Mammary epithelial cell (primary cell): ENCODE measurements at regions of chr21 and their contacts with region 1.

Region 1: DNA sequence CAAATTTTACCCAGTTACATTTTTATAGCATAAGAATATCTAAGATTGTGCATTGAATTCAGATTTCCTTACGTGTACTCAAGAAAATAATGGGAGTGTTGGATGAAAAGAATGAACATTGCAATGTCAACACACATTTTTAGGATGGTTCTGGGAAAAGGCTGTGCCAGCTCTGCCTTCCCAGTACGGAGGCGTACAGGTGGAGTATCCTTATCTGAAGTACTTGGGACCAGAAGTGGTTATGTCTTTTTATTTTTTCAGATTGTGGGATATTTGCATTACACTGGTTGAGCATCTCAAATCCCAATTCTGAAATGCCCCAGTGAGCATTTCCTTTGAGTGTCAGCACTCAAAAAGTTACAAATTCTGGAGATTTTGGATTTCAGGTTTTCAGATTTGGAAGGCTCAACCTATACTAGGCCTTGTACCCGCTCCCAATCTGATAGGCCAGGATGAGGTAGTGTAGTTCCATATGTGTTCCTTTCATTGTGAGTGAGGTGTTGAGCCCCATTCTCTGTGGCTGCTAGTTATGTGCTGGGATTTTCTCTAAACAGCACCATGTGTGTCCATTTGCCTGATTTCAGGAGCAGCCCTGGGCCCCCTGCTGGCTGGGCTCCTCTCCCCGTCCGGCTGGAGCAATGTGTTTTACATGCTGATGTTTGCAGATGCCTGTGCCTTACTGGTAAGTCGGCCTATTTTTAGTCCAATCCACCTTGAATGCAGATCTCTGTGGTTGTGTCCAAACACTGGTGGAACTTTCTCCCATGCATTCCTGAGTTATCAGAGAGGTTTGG is 60.8 kb downstream of the SLC37A1 start:
- DNase-seq: no peak
- H3K4me3 ChIP-seq: no peak overlapping the region
- H3K27ac ChIP-seq: no peak overlapping the region
- H3K4me1 ChIP-seq: no peaks in the 10 kb centered on the region
- H3K27me3 ChIP-seq: no peaks in the 10 kb centered on the region
- CTCF ChIP-seq: peak in 1 of 2 donors; percentile 18

Region 2: GRCh38 chr21:42505090-42505726 is 69.2 kb before region 1 on chr21:
- CTCF ChIA-PET with region 1: no interaction called
- dilution Hi-C with region 1: loop called (anchors 5 kb)
- in situ Hi-C with region 1: no loop called
- intact Hi-C with region 1: no loop called
- DNase-seq: no peak
- H3K4me3 ChIP-seq: no peak overlapping the region
- H3K27ac ChIP-seq: no peak overlapping the region
- H3K4me1 ChIP-seq: no peaks in the 10 kb centered on the region
- H3K27me3 ChIP-seq: no peaks in the 10 kb centered on the region
- CTCF ChIP-seq: no peak